Dorsolateral prefrontal cortex (tissue), 120 donors: ENCODE measurements at regions of chr22 and their contacts with region 1.

Region 1: DNA sequence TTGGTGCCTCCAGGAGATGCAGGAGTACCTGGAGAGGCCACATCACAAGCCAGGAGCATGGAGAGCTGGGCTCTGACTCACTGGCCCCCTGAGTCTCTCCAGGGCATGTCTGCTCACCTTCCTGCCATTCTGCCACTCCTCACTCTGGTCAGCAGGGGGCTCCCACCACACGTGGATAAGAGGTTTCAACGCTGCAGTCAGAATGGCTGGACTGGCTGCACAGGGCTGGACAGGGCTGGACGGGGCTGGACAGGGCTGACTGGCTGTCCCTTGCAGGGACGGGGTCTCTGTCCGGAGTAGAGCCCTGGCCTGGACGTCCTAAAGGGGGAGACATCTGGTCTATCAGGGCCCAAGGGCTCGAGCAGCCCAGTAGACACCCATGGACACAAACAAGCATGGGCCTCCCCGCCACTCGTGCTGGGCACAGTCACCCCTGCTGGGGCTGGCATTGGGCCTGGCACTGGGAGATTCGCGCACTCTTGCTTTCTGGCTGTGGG is 34.6 kb downstream of the CYTH4 start:
- DNase-seq: peak; percentile 45 to 81 (median 73)
- H3K4me3 ChIP-seq: no peak overlapping the region
- H3K27ac ChIP-seq: no peak overlapping the region
- H3K27me3 ChIP-seq: no peaks in the 10 kb centered on the region
- CTCF ChIP-seq: peak; percentile 44 to 92 (median 83)

Region 2: GRCh38 chr22:37457093-37457893 is 140.4 kb after region 1 on chr22:
- intact Hi-C with region 1: loop called (anchors 1 kb)
- DNase-seq: peak; percentile 51 to 81 (median 70)
- H3K4me3 ChIP-seq: no peak overlapping the region
- H3K27ac ChIP-seq: no peak overlapping the region
- H3K27me3 ChIP-seq: peaks cover 0 to 22% (median 0%) of the 10 kb centered on the region in 45 donors
- CTCF ChIP-seq: peak; percentile 59 to 96 (median 89)